OCI-LY7 (cell line): ENCODE measurements at regions of chr20 and their contacts with region 1.

Region 1: GRCh38 chr20:5749952-5750779 is at the start of gene SHLD1:
- DNase-seq: peak; percentile 94
- H3K4me3 ChIP-seq: peak within 1 kb of the TSS; percentile 83
- H3K27ac ChIP-seq: peak within 1 kb of the TSS; percentile 43
- H3K4me1 ChIP-seq: peaks cover 47% of the 10 kb centered on the region
- CTCF ChIP-seq: no peak
- total RNA-seq, gene SHLD1: 19.4 and 29.6 TPM in 2 replicates

Region 2: DNA sequence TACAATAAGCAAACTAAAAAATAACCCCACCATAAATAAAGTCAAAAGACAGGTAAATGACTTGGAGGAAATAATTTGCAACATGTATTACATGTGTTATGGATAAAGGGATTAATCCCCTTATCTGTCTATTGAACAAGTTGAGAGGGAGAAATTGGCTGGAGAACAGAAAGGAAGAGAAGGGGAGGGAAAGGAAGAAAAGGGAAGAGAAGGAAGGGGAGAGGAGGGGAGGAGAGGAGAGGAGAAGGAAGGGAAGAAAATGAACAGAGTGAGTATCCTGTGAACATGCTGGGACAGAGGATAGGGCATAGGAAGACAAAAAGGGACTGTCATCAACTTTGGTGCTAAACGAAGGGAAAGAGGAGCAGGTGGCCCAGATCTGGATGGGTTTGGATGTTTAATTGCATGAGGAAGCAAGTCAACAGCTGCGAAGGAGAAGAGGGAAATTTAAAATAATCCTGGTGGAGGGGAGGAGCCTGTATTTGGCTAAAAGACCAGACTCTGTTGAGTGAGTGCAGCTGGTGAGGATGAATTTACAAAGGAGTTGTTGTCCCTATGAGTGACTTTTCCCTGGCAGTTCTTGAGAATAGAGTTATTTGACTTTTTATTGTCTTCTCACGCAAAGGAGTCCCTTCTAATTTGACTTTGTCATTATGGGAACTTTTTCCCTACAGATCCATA is 14.2 kb before region 1 on chr20:
- CTCF ChIA-PET with region 1: no interaction called
- POLR2A ChIA-PET with region 1: interaction called, 11 read pairs
- intact Hi-C with region 1: no loop called
- DNase-seq: no peak
- H3K4me3 ChIP-seq: no peak overlapping the region
- H3K27ac ChIP-seq: peak overlapping the region; percentile 73
- H3K4me1 ChIP-seq: peaks cover 55% of the 10 kb centered on the region
- CTCF ChIP-seq: no peak